Right ventricle myocardium superior (tissue), 1 donor: ENCODE measurements at regions of chr2 and their contacts with region 1.

Region 1: DNA sequence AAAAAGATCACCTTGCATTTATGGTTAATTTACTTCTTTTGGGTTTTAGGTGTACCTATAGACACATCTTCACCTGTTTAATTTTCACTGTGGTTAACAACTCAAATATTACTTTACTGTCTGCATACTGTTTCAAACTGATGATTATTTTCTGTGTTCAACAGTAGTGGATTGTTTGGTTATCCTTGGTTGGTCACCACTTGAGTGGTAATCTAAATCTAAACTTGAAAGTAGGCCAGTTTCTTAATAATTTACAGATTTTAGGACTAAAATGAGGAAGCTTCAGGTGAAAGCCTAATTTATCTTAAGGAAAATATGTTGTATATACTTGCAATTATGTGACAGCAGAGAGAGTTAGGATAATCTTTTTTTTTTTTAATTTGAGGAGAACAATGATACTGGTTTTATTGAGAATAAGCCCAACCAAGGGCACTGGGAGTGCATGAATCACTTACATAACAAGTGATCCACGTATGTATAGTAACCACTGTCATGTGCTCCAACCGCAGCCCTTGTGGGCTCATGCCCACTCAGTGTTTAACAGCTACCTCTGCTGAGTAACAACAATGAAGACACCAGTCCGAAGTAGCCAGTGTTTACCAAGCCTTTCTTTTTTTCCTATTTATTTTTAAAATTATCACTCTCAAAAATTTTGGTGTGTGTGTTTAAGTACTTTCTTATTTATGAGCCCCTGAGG is 31.0 kb upstream of the WDSUB1 start:
- DNase-seq: no peak
- ATAC-seq: no peak

Region 2: DNA sequence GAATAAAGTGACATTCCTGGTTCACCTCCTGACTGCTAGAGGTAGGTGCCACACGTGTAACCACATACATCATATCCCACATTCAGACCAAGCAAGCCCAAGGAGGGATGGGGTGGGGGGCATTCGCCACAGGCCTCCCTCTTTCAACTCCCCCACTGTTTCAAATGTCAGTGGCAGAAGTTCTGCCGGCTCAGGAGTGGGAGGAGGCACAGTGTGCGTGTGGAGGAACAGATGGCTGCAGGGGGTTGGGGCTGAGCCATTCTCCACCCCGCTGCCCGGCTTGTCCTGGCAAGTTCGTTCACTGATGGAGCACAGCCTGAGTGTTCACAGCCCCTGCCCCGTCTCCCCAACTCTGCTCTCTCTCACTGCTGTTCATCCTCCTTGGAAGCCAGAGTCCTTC is 424.5 kb before region 1 on chr2:
- intact Hi-C with region 1: loop called (anchors 10 kb)
- DNase-seq: no peak
- ATAC-seq: no peak

Region 3: GRCh38 chr2:160207804-160208661 is 890.5 kb after region 1 on chr2:
- intact Hi-C with region 1: no loop called
- DNase-seq: peak; percentile 79
- ATAC-seq: peak; percentile 83